CD4-positive, alpha-beta memory T cell (primary cell): ENCODE measurements at regions of chr1 and their contacts with region 1.

Region 1: DNA sequence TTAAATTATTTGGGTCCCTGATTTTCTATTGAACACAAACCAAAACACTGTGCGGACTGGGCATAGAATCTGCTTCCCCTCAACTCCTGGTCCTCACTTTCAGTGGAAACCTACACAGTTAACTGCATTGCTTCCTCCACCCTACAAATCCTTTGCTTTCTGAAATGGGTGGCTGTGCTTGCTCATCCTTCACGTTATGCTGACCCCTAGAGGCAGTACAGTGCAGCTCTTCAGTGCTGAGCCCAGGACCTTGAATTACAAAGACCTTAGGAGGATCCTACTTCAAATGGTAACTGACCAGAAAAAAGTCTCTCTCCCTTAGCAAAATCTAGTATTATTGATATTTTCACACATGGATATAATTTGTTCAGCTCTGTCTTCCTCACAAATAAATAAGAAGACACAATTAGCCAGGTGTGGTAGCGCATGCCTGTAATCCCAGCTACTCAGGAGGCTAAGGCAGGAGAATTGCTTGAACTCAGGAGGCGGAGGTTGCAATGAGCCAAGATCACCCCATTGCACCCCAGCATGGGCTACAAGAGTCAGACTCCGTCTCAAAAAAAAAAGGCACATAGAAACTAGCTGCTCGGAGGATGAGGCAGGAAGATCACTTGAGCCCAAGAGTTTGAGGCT is 63.4 kb upstream of the L1TD1 start:
- DNase-seq: peak in 1 of 5 donors; percentile 3
- H3K4me3 ChIP-seq: no peak overlapping the region
- H3K4me3 Mint-ChIP-seq: no peak overlapping the region
- H3K27ac ChIP-seq: no peak overlapping the region
- H3K27ac Mint-ChIP-seq: peak overlapping the region in 1 of 7 donors; percentile 48
- H3K4me1 ChIP-seq: no peaks in the 10 kb centered on the region
- H3K4me1 Mint-ChIP-seq: no peaks in the 10 kb centered on the region
- H3K27me3 ChIP-seq: no peaks in the 10 kb centered on the region
- H3K27me3 Mint-ChIP-seq: no peaks in the 10 kb centered on the region

Region 2: GRCh38 chr1:62117018-62117750 is 14.0 kb before region 1 on chr1:
- CTCF ChIA-PET with region 1: interaction called, 12 read pairs
- POLR2A ChIA-PET with region 1: no interaction called
- intact Hi-C with region 1: no loop called
- DNase-seq: no peak
- H3K4me3 ChIP-seq: no peak overlapping the region
- H3K4me3 Mint-ChIP-seq: no peak overlapping the region
- H3K27ac ChIP-seq: no peak overlapping the region
- H3K27ac Mint-ChIP-seq: no peak overlapping the region
- H3K4me1 ChIP-seq: no peaks in the 10 kb centered on the region
- H3K4me1 Mint-ChIP-seq: no peaks in the 10 kb centered on the region
- H3K27me3 ChIP-seq: no peaks in the 10 kb centered on the region
- H3K27me3 Mint-ChIP-seq: no peaks in the 10 kb centered on the region

Region 3: DNA sequence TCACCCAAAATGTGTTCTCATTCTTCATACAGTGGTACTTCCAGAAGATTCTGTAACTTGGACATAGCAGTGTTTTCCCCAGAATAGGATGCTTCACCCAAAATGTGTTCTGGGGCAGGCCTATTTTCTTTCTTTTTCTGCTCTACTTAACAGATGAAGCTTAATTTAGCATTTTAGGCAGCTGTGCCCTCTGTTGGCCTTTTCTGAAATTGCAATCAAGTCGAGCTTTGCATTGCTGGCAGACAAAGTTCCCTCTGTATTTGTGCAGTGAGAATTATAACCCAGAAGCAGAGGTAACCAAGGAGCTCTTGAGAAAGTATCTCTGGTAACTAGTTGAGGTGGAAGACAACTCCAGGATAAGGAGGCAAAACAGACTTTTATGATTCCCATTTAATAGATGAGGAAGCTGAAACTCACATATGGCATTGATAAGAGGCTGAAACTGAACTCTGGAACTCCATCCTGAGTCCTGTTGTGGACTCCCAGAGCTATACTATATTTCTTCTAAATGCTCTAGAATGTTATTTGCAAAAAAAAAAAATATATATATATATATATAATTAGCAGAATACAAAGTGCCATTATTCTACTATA is 13.1 kb after region 1 on chr1:
- CTCF ChIA-PET with region 1: interaction called, 39 read pairs
- POLR2A ChIA-PET with region 1: interaction called, 3 read pairs
- intact Hi-C with region 1: no loop called
- DNase-seq: peak in 4 of 5 donors; percentile 5 to 20 (median 14)
- H3K4me3 ChIP-seq: no peak overlapping the region
- H3K4me3 Mint-ChIP-seq: no peak overlapping the region
- H3K27ac ChIP-seq: no peak overlapping the region
- H3K27ac Mint-ChIP-seq: no peak overlapping the region
- H3K4me1 ChIP-seq: no peaks in the 10 kb centered on the region
- H3K4me1 Mint-ChIP-seq: peaks cover 0 to 4% (median 1%) of the 10 kb centered on the region in 4 donors
- H3K27me3 ChIP-seq: no peaks in the 10 kb centered on the region
- H3K27me3 Mint-ChIP-seq: no peaks in the 10 kb centered on the region